Activated CD4-positive, alpha-beta memory T cell treated with anti-CD3 and anti-CD28 coated beads for 36 hours (primary cell): ENCODE measurements at regions of chr19 and their contacts with region 1.

Region 1: DNA sequence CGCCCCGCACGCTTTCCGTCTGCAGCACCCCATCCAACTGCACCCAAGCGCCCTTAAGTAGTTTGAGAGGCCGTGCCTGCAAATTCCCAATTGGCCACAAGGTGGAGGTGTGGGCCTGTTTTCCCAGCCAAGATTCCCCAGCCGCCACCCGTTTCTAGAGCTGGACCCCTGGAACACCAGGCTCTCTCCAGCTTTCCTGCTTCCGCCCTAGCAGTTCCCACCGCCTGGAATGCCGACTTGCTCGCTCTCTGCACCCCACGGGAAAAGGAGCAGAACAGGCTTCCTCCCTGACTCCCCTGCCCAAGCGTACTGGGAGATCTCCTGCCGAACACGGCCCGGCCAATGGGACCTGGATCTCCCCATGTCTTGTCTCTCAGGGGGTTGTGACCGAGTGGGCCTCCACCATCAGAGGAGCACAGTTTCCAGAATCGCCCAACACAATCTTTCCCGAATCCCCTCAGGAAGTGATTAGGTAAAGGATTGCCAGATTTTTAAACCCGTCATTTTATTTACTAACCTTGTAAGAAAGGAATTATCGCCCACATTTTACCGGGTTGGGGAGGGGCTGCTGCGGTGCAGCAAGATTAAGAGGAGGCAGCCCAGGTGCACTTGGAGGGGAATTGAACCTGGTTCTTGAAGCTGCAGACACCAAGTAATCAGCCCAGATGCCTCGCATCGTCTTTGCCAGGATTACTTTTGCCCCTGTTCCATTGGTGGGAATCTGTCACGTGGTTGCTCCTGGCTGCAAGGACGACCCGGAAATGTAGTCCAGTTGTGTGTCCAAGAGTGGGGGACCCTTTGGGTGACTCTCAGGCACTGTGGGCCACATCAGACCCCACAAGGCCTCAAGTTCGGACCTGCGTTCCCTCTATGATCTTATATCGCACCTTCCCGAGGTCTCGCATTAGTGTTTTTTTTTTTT is 3.5 kb upstream of the NAPSA start:
- DNase-seq: peak; percentile 88
- H3K4me3 Mint-ChIP-seq: peak overlapping the region; percentile 94
- H3K27ac Mint-ChIP-seq: peak overlapping the region; percentile 93
- H3K4me1 Mint-ChIP-seq: peaks cover 35% of the 10 kb centered on the region
- H3K27me3 Mint-ChIP-seq: no peaks in the 10 kb centered on the region

Region 2: DNA sequence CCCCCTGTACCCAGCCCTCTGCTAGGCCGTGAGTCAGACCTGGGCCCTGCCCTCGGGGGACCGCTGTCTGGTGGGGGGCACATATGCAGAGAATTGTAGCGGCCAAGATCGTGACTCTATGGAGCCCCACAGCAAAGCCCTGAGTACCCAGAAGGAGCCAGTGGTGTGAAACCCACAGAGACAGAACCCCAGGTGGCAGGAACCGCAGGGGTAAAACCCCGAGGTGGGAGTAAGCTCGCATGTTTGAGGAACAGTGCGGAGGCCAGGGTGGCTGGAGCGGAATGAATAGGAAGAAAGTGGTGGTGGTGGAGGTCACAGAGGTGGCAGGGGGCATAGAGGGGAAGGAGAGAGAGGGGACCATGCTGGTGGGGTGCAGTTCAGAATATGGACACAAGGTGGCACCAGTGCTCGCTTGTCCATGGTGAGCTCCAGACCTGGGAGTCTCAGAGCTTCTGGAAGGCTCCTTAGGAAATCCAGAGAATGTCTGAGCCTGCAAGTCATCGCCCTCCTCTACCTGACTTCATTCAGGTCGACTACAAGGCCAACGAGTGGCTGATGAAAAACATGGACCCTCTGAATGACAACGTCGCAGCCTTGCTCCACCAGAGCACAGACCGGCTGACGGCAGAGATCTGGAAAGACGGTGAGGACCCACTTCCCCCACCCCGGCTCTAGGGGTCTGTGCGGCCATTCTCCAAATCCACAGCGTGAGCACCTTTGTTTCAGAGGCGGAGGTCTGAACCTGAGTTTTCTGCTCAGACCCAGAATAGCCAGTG is 116.6 kb before region 1 on chr19:
- CTCF ChIA-PET with region 1: no interaction called
- POLR2A ChIA-PET with region 1: no interaction called
- intact Hi-C with region 1: loop called (anchors 5 kb)
- DNase-seq: peak; percentile 57
- H3K4me3 Mint-ChIP-seq: no peak overlapping the region
- H3K27ac Mint-ChIP-seq: no peak overlapping the region
- H3K4me1 Mint-ChIP-seq: no peaks in the 10 kb centered on the region
- H3K27me3 Mint-ChIP-seq: peaks cover 19% of the 10 kb centered on the region

Region 3: DNA sequence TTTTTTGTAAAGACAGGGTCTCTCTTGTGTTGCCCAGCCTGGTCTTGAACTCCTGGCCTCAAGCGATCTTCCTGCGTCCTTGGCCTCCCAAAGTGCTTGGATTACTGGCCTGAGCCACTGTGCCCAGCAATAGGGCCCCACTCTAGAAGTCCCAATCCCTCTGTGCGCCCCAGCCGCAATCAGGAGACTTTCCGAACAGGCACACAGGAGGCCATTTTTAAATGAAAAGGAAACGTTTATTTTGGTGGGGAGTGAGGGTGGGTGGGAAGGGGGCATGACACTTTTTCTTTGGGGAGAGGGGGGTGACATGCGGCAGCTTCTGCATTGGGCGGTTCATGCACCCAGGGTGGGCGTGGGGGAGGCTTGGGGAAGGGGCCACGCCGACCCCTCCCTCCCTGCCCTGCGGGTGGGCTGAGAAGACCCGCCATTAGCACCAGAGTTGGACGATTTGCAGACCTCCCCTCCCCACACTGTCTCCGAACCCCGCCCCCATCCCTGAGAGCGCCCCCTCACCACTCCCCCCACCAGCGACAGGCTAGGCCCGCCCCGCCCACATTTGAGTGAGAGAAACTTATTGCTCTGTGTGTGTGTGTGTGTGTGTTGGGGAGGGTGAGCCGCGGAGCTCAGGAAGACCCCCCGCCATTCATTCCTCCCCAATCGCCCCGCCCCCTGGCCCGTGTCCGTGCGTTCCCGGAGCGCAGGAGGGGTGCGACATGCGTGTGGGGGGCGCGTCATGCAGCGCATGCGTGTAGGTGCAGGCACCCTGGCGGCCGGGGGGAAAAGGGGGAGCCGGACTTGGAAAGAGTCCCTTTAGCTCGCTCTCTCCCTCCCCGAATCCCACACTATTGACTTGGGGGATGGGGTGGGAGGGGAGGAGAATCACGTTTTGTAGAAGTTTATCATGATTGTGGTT is 56.9 kb before region 1 on chr19:
- CTCF ChIA-PET with region 1: no interaction called
- POLR2A ChIA-PET with region 1: no interaction called
- intact Hi-C with region 1: no loop called
- DNase-seq: peak; percentile 14
- H3K4me3 Mint-ChIP-seq: no peak overlapping the region
- H3K27ac Mint-ChIP-seq: no peak overlapping the region
- H3K4me1 Mint-ChIP-seq: peaks cover 17% of the 10 kb centered on the region
- H3K27me3 Mint-ChIP-seq: peaks cover 60% of the 10 kb centered on the region

Region 4: DNA sequence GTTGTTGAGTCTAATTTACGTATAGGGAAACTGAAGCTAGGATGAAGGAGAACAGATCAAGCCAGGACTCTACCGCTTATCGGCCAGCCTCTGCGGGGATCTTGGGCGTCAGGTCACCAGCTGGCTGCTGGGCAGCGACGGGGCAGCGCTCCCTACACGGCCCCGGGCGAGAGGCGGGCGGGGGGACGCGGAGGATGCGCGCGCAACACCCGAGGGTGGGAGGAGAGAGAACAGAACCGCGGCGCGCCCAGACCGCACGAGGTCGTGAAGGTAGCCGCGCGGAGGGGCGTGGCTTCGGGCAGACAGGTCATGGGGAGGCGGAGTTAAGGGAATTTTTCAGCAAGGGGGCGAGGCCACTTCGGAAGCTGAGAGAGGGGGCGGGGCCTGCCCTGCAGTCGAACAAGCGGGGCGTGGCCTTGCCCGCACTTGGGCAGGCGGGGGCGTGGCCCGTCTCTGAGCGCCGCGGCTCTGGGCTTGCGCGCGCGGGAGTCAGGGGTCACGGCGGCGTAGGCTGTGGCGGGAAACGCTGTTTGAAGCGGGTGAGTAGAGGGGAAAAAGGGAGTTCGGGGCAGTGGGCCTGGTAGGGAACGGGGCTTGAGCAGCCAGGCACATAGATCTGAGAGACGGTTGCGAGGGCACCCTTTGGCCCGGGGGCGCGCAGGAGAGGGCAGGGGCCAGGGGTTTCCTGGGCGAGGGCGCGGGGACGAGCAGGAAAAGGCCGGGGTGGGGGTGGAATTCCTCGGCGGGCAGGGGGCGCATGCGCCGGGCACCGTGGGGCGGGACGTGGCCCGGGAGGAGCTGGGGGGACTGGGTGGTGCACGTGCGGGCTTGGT is 15.2 kb after region 1 on chr19 and contains the start of gene POLD1:
- CTCF ChIA-PET with region 1: interaction called, 13 read pairs
- POLR2A ChIA-PET with region 1: interaction called, 3 read pairs
- intact Hi-C with region 1: loop called (anchors 1 kb)
- DNase-seq: peak; percentile 99
- H3K4me3 Mint-ChIP-seq: peak within 1 kb of the TSS; percentile 98
- H3K27ac Mint-ChIP-seq: peak within 1 kb of the TSS; percentile 95
- H3K4me1 Mint-ChIP-seq: peaks cover 33% of the 10 kb centered on the region
- H3K27me3 Mint-ChIP-seq: no peaks in the 10 kb centered on the region
- total RNA-seq, gene POLD1: 190 to 191 TPM